ENCODE measurements at regions of chr3 and their contacts with region 1.

Region 1: DNA sequence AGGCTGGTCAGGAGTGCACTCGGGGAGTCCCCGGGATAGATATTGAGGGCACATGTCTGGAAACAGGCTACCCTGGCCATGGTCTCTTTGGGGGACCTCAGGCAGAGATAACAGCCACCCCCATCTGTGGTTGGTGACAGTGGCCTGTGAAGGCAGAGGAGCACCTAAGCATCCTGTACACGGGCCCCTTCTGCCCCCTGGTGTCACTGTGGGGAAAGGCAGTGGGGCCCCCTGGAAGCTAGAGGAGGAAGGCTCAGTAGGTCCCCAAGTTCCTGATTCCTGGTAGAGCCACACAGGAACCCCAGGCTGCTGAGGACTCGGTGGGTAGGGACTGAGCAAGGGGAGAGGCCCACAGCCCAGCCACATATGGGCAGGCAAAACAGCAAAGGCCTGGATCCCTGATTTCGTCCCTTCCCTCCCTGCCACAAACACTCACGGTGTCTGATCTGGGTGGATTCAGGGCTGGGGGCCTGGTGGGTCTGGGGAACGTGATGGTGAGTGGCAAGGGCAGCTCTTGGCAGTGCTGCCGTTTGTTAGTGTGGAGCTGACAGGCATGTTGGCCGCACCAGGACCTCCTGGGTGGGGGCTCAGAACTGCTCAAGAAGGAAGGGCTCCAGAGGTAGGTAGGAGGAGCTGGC is 14.1 kb upstream of the CXCR6 start:
- DNase-seq: no peak
- H3K4me3 ChIP-seq: no peak overlapping the region
- H3K27ac ChIP-seq: no peak overlapping the region
- H3K4me1 ChIP-seq: no peaks in the 10 kb centered on the region
- H3K27me3 ChIP-seq: no peaks in the 10 kb centered on the region
- CTCF ChIP-seq: peak; percentile 17 to 50 (median 36)
- POLR2A ChIP-seq: no peak

Region 2: DNA sequence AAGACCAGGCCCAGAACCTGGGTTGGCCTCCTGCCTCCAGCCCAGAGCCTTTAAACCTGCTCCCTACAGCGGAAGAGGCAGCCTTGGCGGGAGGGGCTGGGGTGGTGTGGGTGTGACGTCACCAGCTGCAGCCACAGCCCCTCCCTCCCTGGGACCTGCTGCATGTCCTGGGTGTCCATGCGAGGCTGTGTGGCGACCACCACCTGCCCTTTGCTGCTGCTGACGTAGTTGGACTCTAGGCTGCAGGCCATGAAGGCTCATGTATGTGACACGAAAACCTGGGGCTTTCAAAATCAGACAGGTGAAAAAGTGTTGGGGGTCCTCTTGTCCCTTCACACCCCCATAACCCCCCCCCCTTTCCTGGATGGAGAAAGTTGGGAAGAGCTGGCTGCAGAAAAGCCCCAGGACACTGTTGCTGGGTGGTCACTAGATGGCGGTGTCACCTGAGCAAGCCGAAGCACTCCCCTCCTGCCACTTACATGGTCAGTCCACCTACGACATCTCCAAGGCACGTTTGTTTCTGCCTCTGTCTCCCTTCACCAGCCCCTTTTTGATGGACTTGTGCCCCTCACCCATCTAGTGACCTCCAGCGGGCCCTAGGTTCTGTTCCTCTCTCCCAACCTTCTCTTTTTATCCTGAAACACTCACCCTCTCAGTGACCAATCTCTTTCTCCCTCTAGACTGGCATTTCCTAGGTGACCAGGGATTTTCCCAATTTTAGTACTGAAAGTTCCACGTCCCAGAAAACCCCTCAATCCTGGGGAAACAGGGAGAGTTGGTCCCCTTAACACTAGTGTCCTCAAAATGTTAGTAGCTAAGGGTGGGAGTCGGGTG is 168.1 kb before region 1 on chr3:
- intact Hi-C with region 1: loop called (anchors 5 kb)
- DNase-seq: peak in 1 of 2 donors; percentile 84
- H3K4me3 ChIP-seq: no peak overlapping the region
- H3K27ac ChIP-seq: no peak overlapping the region
- H3K4me1 ChIP-seq: no peaks in the 10 kb centered on the region
- H3K27me3 ChIP-seq: no peaks in the 10 kb centered on the region
- CTCF ChIP-seq: peak; percentile 48 to 75 (median 48)
- POLR2A ChIP-seq: no peak

Region 3: GRCh38 chr3:45915518-45916231 is 13.5 kb before region 1 on chr3:
- intact Hi-C with region 1: no loop called
- DNase-seq: no peak
- H3K4me3 ChIP-seq: no peak overlapping the region
- H3K27ac ChIP-seq: no peak overlapping the region
- H3K4me1 ChIP-seq: peaks cover 13% of the 10 kb centered on the region
- H3K27me3 ChIP-seq: no peaks in the 10 kb centered on the region
- CTCF ChIP-seq: no peak
- POLR2A ChIP-seq: no peak